AG04449 (cell line): ENCODE measurements at regions of chr3 and their contacts with region 1.

Region 1: GRCh38 chr3:71022551-71023335 is 560.8 kb downstream of the FOXP1 start:
- DNase-seq: no peak
- H3K4me3 ChIP-seq: no peak overlapping the region
- CTCF ChIP-seq: no peak

Region 2: DNA sequence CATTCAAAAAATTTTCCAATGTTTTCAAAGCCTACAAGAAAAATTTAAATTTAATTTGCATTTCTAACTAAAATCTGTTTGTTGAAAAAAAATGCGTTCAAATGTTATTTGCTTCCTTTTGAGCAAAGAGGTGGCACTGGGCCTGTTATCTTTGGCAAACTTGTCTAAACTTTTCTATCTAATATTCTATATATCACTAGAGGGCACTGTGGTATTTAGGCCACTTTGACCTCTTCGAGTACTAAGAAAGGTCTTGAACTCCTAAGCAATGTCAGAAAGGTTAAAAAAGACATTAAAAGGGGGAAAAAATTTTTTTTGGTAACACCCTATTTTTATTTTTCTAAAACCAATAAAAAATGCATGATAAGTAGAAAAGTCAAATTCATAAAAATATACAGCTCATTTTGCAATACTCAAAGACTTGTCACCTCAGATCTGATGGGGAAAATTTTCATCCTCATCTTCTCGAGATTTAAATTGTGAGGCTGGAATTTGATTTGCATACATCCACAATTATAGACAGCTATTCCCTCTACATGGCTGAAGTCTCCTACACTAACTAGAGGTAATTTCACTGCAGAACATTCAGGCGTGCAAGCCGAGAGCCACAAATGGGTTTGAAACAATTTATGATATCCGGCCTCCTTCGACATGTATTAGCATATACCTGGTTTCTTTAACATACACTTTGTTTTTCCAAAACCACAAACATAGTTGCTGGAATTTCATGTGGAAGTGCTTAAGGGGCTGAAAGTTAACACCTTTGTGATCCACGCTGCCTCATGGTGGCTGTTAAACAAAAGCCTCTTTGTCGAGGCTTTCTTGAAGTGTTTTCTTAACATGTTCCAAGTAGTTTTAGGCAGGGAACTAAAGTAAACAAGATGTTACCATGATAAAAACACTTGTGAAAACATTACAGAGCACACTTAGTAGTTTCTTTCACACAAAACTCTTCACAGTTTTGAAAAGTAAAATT is 15.6 kb before region 1 on chr3:
- CTCF ChIA-PET with region 1: interaction called, 14 read pairs
- POLR2A ChIA-PET with region 1: no interaction called
- DNase-seq: no peak
- H3K4me3 ChIP-seq: no peak overlapping the region
- CTCF ChIP-seq: peak; percentile 9

Region 3: GRCh38 chr3:71035314-71035713 is 12.6 kb after region 1 on chr3:
- CTCF ChIA-PET with region 1: interaction called, 11 read pairs
- POLR2A ChIA-PET with region 1: no interaction called
- DNase-seq: no peak
- H3K4me3 ChIP-seq: no peak overlapping the region
- CTCF ChIP-seq: no peak